ENCODE measurements at regions of chr22 and their contacts with region 1.

Region 1: DNA sequence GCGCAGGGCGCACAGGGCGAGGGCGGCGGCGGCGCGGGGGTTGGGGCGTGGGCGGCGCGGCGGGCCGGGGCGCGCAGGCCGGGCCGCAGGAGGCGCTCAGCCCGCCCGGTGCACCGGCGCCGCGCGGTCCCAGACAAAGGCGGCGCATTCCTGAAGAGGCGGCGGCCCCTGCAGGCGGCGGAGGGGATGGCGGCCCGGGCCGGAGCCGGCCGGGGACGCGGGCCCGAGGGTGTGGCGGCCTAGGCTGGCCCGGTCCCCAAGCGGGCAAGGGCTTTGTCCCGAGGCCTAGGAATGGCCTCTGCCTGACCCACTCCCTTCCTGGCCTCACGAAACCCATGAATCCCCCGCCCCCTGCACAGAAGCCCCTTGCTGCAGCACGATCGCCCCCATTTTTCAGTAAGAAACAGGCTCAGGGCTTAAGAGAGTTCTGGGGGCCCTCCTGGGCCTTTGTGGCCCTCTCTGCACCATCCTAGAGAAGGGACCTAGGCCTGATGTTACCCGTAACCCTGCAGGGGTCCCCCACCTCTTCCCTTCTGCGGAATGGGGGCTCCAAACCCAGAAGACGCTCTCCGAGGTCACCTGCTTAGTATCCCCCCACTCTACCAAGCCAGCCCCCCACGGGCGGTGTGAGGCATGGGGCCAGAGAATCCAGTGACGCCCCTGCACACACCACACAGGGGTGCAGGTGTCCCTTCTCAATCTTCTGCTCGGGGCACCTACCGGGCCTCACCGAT is at the start of gene RTN4R:
- DNase-seq: no peak
- ATAC-seq: peak; percentile 95
- H3K4me3 ChIP-seq: no peak within 1 kb of the TSS
- H3K27ac ChIP-seq: no peak within 1 kb of the TSS
- H3K4me1 ChIP-seq: no peaks in the 10 kb centered on the region
- H3K27me3 ChIP-seq: no peaks in the 10 kb centered on the region; a peak in 1 of 4 replicates
- CTCF ChIP-seq: peak; percentile 60 to 74 (median 61); a peak in 5 of 6 replicates
- EP300 ChIP-seq: no peak
- POLR2A ChIP-seq: no peak
- RAD21 ChIP-seq: peak; percentile 82
- polyA plus RNA-seq, gene RTN4R: not detected

Region 2: DNA sequence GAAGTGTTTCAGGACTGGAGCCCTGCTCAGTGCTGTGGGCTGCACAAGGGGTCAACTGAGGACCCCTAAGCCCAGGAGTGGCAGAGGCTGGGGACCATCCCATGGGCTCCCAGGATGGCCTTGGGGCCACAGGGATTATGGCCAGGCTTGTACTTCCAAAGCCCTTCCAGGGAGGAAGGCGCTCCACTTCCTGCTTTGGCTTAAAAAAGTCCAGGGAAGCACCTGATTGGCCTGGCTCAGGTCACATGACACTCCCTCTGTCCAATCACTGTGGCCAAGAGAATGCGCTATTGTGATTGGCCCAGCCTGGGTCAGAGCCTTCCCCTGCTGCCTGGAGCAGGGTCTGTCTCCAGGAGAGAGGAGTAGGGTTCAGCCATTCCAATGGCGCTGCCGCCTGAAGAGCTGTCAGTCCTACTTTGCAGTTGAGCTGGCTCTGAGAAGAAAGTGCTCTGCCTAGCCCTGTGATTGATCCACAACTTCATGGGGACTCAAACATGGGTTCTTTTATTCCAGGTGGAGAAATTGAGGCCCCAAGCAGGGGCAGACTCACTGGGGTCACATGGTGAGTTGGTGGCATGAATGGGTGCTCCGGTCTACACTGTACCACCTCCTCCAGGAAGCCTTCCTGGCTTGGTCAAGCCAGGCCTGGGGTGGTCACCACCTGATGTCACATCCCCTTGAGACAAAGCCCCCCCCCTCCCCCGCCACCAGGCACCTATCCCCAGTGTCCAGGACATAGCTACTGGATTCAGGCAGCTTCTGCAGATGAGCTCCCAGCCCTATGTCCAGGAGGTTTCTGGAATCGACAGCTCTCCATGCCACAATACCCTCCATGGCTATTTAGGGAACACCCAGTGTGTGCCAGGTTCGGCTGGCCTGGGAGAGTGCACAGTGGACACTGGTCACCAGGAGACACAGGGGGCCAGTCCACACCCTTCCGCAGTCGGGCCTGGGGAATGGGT is 48.5 kb before region 1 on chr22:
- CTCF ChIA-PET with region 1: no interaction called
- POLR2A ChIA-PET with region 1: no interaction called
- RAD21 ChIA-PET with region 1: no interaction called
- SMC1A ChIA-PET with region 1: no interaction called
- in situ Hi-C with region 1: loop called (anchors 5 kb)
- intact Hi-C with region 1: no loop called
- DNase-seq: no peak
- ATAC-seq: no peak
- H3K4me3 ChIP-seq: no peak overlapping the region
- H3K27ac ChIP-seq: no peak overlapping the region
- H3K4me1 ChIP-seq: no peaks in the 10 kb centered on the region
- H3K27me3 ChIP-seq: no peaks in the 10 kb centered on the region
- CTCF ChIP-seq: no peak
- EP300 ChIP-seq: no peak
- POLR2A ChIP-seq: no peak
- RAD21 ChIP-seq: no peak

Region 3: GRCh38 chr22:20456064-20456721 is 187.7 kb after region 1 on chr22:
- CTCF ChIA-PET with region 1: no interaction called
- POLR2A ChIA-PET with region 1: no interaction called
- RAD21 ChIA-PET with region 1: no interaction called
- SMC1A ChIA-PET with region 1: no interaction called
- in situ Hi-C with region 1: no loop called
- intact Hi-C with region 1: no loop called
- DNase-seq: peak; percentile 44
- ATAC-seq: peak; percentile 99
- H3K4me3 ChIP-seq: no peak overlapping the region
- H3K27ac ChIP-seq: no peak overlapping the region
- H3K4me1 ChIP-seq: peaks cover 9% of the 10 kb centered on the region
- H3K27me3 ChIP-seq: no peaks in the 10 kb centered on the region
- CTCF ChIP-seq: peak; percentile 92 to 95 (median 95)
- EP300 ChIP-seq: no peak
- POLR2A ChIP-seq: no peak
- RAD21 ChIP-seq: peak; percentile 78